Naive thymus-derived CD8-positive, alpha-beta T cell (primary cell): ENCODE measurements at regions of chr7 and their contacts with region 1.

Region 1: GRCh38 chr7:36366718-36367560 is 22.7 kb upstream of the ANLN start:
- DNase-seq: peak; percentile 89 to 96 (median 93)
- ATAC-seq: peak; percentile 93 to 95
- H3K4me3 Mint-ChIP-seq: peak overlapping the region; percentile 85 to 96 (median 94)
- H3K27ac Mint-ChIP-seq: peak overlapping the region; percentile 8 to 95 (median 90)
- H3K4me1 Mint-ChIP-seq: peaks cover 0 to 9% (median 3%) of the 10 kb centered on the region in 4 donors
- H3K27me3 Mint-ChIP-seq: peaks cover 0 to 2% (median 0%) of the 10 kb centered on the region in 5 donors

Region 2: DNA sequence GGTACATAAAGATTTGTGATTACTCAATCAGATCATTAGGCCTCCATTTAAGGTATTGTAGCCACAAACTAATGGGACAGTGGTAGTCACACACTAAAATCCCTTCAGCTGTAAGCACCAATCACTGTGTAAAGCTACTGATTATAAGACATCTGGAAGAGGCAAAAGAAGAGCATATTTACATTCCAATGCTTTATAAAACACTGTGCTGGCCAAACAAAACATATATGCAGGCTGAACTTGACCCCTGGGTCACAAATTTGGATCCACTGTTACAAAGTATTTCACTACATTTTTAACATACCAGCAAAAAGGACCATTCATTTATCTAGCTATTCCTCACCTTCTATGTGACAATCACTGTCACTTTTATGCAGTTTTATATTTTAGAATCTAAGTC is 18.7 kb before region 1 on chr7:
- POLR2A ChIA-PET with region 1: no interaction called
- DNase-seq: no peak
- ATAC-seq: no peak
- H3K4me3 Mint-ChIP-seq: no peak overlapping the region
- H3K27ac Mint-ChIP-seq: peak overlapping the region in 1 of 10 donors; percentile 32
- H3K4me1 Mint-ChIP-seq: no peaks in the 10 kb centered on the region
- H3K27me3 Mint-ChIP-seq: no peaks in the 10 kb centered on the region

Region 3: DNA sequence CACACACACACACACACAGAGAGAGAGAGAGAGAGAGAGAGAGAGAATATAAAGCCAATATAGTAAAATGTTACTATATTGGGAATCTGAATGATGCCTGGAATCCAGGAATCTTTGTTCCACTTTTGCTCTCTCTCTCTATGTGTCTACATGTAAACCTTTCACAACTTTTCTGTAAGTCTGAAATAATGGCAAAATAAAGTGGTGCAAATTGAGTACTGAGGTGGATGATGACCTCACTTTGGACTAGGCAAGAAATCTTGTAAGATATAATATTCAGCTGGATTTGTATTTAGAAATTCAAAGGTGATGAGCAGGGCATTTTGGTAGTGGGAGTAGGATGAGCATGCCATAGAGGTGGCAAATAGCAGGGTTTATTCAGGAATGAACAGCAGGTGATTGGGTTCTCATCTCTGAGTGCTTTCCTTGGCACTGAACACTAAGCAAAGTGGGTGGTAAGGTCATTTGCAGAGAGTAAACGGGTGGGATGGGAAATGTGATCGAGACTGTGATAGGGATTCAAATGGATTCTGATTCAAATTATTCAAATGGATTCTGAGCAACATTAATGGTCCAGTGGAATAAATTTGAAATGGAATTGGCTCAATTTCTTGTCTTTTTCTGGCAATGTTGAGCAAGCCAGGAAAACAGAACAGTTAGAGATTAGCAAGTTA is 13.0 kb after region 1 on chr7:
- POLR2A ChIA-PET with region 1: interaction called, 35 read pairs
- DNase-seq: no peak
- ATAC-seq: no peak
- H3K4me3 Mint-ChIP-seq: peak overlapping the region in 1 of 10 donors; percentile 5
- H3K27ac Mint-ChIP-seq: peak overlapping the region in 7 of 10 donors; percentile 1 to 93 (median 73)
- H3K4me1 Mint-ChIP-seq: peaks cover 22 to 32% (median 28%) of the 10 kb centered on the region in 4 donors
- H3K27me3 Mint-ChIP-seq: peaks cover 0 to 2% (median 0%) of the 10 kb centered on the region in 5 donors

Region 4: DNA sequence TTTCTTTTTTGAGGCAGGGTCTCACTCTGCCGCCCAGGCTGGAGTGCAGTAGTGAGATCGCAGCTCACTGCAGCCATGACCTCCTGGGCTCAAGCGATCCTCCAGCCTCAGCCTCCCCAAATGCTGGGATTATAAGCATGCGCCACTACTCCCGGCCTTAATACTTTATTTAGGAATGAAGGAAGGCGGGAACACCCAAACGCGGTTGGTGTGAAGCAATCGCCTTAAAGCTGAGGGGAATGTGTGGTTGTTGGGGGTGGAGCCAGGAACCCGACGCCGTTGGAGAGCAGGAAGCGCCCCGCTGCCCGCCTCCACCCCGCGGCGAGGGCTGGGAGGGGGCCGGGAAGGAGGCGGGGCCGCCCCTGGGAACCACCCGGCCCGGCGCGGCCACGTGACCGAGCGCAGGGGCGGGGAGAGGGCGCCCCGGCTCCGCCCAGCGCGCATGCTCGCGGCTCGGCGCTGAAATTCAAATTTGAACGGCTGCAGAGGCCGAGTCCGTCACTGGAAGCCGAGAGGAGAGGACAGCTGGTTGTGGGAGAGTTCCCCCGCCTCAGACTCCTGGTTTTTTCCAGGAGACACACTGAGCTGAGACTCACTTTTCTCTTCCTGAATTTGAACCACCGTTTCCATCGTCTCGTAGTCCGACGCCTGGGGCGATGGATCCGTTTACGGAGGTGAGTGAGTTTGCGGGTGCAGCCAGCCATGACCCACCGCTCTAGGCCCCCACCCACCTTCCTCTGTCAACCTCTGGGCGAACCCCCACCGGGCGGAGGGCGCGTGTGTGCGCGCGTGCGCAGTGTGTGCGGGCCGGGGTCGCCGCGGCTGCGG is 22.6 kb after region 1 on chr7 and contains the start of gene ANLN:
- POLR2A ChIA-PET with region 1: interaction called, 26 read pairs
- DNase-seq: peak; percentile 70 to 87 (median 80)
- ATAC-seq: peak; percentile 87 to 90
- H3K4me3 Mint-ChIP-seq: peak within 1 kb of the TSS; percentile 75 to 88 (median 84)
- H3K27ac Mint-ChIP-seq: peak within 1 kb of the TSS; percentile 67 to 93 (median 82)
- H3K4me1 Mint-ChIP-seq: peaks cover 10 to 28% (median 20%) of the 10 kb centered on the region in 4 donors
- H3K27me3 Mint-ChIP-seq: peaks cover 0 to 15% (median 3%) of the 10 kb centered on the region in 5 donors
- polyA plus RNA-seq, gene ANLN: not detected

Region 5: DNA sequence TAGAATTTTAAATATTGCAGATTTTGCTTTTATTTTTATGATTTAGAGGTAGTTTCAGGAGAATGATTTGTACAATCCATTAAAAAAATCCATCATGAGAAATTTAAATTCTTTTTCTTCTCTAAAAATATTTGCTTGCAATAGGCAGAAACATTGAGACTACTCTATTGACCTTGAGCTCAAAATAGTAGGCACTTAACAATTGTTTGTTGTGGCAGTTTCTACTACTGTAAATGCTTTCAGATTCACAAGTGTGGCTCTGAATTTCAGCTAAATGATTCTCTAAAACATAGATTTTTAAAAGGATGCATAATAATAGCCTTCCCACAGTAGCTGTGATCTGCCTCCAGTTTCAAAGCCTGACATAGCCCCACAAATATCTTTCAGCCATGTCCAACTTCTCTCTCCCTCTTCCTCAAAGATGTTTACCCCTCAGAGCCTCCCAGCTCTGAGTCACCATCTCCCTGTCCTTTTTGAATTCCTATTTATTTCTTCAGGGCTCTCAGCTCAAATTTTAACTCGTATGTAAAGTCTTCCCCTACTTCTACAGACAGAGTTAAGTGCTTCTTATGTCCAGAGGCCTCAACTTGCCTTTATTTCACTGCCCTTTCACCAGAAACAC is 196.9 kb after region 1 on chr7:
- POLR2A ChIA-PET with region 1: no interaction called
- DNase-seq: no peak
- ATAC-seq: no peak
- H3K4me3 Mint-ChIP-seq: no peak overlapping the region
- H3K27ac Mint-ChIP-seq: peak overlapping the region in 8 of 10 donors; percentile 2 to 91 (median 64)
- H3K4me1 Mint-ChIP-seq: peaks cover 0 to 11% (median 0%) of the 10 kb centered on the region in 4 donors
- H3K27me3 Mint-ChIP-seq: no peaks in the 10 kb centered on the region